ENCODE measurements at regions of chr16 and their contacts with region 1.

Region 1: DNA sequence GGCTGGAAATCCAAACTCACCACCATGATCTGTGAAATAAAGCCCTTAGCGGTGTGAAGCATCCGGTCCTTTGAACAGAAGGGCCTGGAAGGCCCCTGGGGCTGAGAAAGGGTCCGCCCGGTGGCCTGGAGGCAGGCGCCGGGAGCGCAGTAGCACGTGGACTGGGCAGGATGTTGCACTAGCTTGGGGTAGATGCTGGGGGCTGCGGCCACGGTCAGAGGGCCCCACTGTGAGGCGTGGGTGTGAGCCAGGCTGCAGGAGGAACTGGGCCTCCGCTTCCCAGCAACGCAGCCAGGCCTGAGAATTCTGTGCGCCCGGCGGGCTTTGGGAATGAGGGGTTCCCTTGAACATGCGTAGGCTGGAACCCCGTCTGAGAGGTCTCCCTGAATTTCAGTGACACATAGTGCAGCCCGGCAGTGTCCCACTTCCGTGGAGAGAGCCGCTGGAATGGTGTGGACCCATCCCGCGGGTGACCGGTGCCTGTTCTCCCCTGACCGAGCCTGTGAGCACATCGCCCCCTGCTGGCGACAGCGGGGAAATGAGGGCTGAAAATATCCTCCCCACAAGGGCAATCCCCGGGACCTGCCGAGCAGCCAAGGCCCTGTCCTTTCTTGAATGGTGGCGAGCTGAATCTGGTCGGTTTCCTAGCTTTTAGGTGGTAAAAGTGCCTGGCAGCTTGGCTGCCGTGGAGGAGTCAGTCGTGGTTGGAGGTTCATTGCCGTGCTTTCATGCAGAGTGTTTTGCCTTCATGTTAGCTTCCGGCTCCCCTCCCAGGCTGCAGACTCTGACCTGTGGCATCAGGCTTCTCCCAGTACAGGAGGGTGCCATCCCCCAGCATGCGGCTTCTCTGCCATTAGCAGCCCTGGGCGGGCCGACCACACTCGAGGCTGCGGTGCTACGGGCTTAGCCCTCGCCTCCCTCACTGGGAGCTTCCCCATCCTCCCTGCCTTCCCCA is 43.8 kb downstream of the DNAJA2 start:
- DNase-seq: peak; percentile 76
- ATAC-seq: peak; percentile 73
- H3K4me3 ChIP-seq: no peak overlapping the region
- H3K4me3 Mint-ChIP-seq: no peak overlapping the region
- H3K27ac ChIP-seq: no peak overlapping the region
- H3K27ac Mint-ChIP-seq: no peak overlapping the region
- H3K4me1 ChIP-seq: peaks cover 5 to 18% of the 10 kb centered on the region in 2 donors
- H3K4me1 Mint-ChIP-seq: peaks cover 7% of the 10 kb centered on the region
- H3K27me3 ChIP-seq: no peaks in the 10 kb centered on the region
- H3K27me3 Mint-ChIP-seq: no peaks in the 10 kb centered on the region
- CTCF ChIP-seq: peak; percentile 96

Region 2: DNA sequence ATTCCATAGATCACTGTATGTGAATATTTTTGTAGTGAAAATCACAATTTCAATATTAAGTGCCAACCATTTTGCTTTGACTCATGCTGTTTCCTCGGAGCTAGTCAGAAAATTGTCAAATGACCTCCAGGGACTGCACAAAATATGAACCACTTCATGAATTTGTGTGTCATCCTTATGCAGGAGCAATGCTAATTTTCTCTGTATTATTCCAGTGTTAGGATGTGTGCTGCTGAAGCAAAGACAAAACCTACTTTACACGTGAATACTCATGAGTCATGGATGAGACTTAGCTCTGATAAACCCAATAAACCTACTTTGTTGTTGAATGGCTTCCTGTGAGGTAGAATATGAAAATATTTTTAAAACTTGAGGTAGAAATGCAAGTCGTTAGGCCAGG is 373.7 kb before region 1 on chr16:
- CTCF ChIA-PET with region 1: interaction called, 3 read pairs
- POLR2A ChIA-PET with region 1: no interaction called
- intact Hi-C with region 1: loop called (anchors 10 kb)
- DNase-seq: no peak
- ATAC-seq: no peak
- H3K4me3 ChIP-seq: no peak overlapping the region
- H3K4me3 Mint-ChIP-seq: no peak overlapping the region
- H3K27ac ChIP-seq: no peak overlapping the region
- H3K27ac Mint-ChIP-seq: no peak overlapping the region
- H3K4me1 ChIP-seq: no peaks in the 10 kb centered on the region
- H3K4me1 Mint-ChIP-seq: peaks cover 2% of the 10 kb centered on the region
- H3K27me3 ChIP-seq: no peaks in the 10 kb centered on the region
- H3K27me3 Mint-ChIP-seq: peaks cover 20% of the 10 kb centered on the region
- CTCF ChIP-seq: no peak

Region 3: DNA sequence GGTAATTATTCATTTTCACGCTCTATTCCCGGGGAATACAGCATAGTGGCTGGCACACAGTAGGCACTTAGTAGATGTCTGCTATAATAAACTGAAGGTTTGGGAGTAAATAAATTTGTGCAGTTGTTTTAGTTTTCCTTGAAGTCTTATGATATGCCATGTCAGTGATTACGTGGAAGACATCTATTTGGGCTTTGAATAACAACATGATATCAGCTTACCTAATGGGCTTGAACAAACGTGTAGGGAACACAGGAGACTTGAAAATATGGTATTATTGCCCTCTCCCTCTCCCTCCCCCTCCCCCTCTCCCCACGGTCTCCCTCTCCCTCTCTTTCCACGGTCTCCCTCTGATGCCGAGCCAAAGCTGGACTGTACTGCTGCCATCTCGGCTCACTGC is 250.4 kb after region 1 on chr16:
- CTCF ChIA-PET with region 1: no interaction called
- POLR2A ChIA-PET with region 1: no interaction called
- intact Hi-C with region 1: no loop called
- DNase-seq: no peak
- ATAC-seq: no peak
- H3K4me3 ChIP-seq: no peak overlapping the region
- H3K4me3 Mint-ChIP-seq: no peak overlapping the region
- H3K27ac ChIP-seq: no peak overlapping the region
- H3K27ac Mint-ChIP-seq: no peak overlapping the region
- H3K4me1 ChIP-seq: no peaks in the 10 kb centered on the region
- H3K4me1 Mint-ChIP-seq: no peaks in the 10 kb centered on the region
- H3K27me3 ChIP-seq: no peaks in the 10 kb centered on the region
- H3K27me3 Mint-ChIP-seq: no peaks in the 10 kb centered on the region
- CTCF ChIP-seq: no peak

Measured in B cell (primary cell).